HepG2 (cell line): ENCODE measurements at regions of chr14 and their contacts with region 1.

Region 1: DNA sequence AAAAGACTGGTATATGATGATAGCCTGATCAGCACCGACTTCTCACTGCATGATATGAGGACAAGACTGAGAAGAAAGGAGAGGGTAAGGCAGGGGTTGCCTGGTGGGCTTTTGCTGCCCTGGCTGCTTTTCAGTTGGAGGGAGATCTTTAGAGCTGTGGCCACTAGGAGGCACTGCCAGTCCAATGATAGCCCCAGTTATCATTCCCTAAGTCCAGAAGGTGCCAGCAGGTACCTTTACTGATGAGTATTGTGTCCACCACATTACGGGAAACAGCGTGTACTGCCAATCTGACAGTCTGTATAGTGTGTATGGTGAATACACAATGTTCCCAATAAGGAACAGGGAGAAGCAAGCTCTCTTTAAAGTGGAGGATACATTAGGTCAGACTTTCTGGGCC is 55.8 kb upstream of the CCDC175 start:
- DNase-seq: peak; percentile 20
- ATAC-seq: peak; percentile 90
- H3K4me3 ChIP-seq: no peak overlapping the region
- H3K27ac ChIP-seq: no peak overlapping the region
- H3K4me1 ChIP-seq: peaks cover 8% of the 10 kb centered on the region; the same call in 1 of the 2 replicates
- H3K27me3 ChIP-seq: peaks cover 1 to 3% of the 10 kb centered on the region in 2 experiments; a peak in 2 of 5 replicates
- CTCF ChIP-seq: peak; percentile 81
- EP300 ChIP-seq: no peak
- POLR2A ChIP-seq: no peak
- RAD21 ChIP-seq: no peak

Region 2: DNA sequence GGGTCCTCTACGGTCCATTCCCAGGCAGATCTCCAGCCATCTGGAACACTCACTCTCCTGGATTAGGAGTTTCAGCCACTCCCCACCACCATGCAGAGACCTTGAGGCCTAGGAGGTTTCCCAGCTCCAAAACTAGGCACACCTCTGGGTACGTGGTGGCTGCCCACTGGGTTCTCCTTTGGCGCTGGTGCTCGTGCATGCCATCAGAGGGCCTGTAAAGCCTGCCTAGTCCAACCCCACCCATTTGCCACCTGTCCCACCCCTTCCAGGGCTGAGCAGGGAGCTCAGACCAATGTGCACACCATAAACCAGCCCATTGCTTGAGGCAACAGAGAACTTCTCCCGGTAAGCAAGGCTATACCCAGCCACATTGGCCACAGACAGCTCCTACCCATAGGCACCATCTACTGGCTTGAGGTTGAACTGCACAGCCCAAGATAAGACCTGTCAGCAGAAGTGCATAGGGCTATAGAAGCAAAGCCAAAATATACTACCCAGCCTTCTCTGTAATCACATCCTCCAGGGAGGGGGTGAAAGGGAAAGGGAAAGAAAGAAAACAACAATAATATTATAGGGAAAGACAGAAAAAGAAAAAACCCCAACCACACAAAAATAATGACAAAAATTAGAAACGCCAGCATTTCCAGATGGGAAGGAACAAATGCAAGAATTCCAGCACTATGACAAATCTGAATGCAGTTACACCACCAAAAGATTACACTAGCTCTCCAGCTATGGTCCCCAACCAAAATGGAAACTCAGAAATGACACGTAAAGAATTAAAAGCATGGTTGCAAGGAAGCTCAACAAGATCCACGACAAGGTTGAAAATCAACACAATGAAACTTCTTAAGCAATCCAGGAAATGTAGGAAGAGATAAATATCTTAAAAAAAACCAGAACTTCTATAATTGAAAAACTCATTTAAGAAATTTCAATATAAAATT is 56.1 kb after region 1 on chr14:
- CTCF ChIA-PET with region 1: no interaction called
- POLR2A ChIA-PET with region 1: no interaction called
- in situ Hi-C with region 1: no loop called
- intact Hi-C with region 1: loop called (anchors 1 kb)
- DNase-seq: peak; percentile 20
- ATAC-seq: peak; percentile 99
- H3K4me3 ChIP-seq: no peak overlapping the region
- H3K27ac ChIP-seq: no peak overlapping the region
- H3K4me1 ChIP-seq: no peaks in the 10 kb centered on the region
- H3K27me3 ChIP-seq: no peaks in the 10 kb centered on the region; a peak in 1 of 5 replicates
- CTCF ChIP-seq: peak; percentile 76
- EP300 ChIP-seq: no peak
- POLR2A ChIP-seq: no peak
- RAD21 ChIP-seq: no peak

Region 3: GRCh38 chr14:59897761-59898383 is 265.5 kb after region 1 on chr14:
- CTCF ChIA-PET with region 1: no interaction called
- POLR2A ChIA-PET with region 1: no interaction called
- in situ Hi-C with region 1: no loop called
- intact Hi-C with region 1: loop called (anchors 1 kb)
- DNase-seq: peak; percentile 30
- ATAC-seq: peak; percentile 93
- H3K4me3 ChIP-seq: no peak overlapping the region
- H3K27ac ChIP-seq: no peak overlapping the region
- H3K4me1 ChIP-seq: no peaks in the 10 kb centered on the region
- H3K27me3 ChIP-seq: peaks cover 0 to 5% of the 10 kb centered on the region in 2 experiments; a peak in 3 of 5 replicates
- CTCF ChIP-seq: peak; percentile 79
- EP300 ChIP-seq: no peak
- POLR2A ChIP-seq: no peak
- RAD21 ChIP-seq: peak; percentile 64

Region 4: GRCh38 chr14:59918824-59919569 is 286.6 kb after region 1 on chr14:
- CTCF ChIA-PET with region 1: interaction called, 16 read pairs
- POLR2A ChIA-PET with region 1: no interaction called
- in situ Hi-C with region 1: loop called (anchors 10 kb)
- intact Hi-C with region 1: loop called (anchors 1 kb)
- DNase-seq: peak; percentile 32
- ATAC-seq: peak; percentile 82
- H3K4me3 ChIP-seq: peak overlapping the region; percentile 55 to 83 (median 64)
- H3K27ac ChIP-seq: peak overlapping the region; percentile 90
- H3K4me1 ChIP-seq: peaks cover 20% of the 10 kb centered on the region
- H3K27me3 ChIP-seq: no peaks in the 10 kb centered on the region
- CTCF ChIP-seq: peak; percentile 45
- EP300 ChIP-seq: no peak
- POLR2A ChIP-seq: no peak
- RAD21 ChIP-seq: no peak

Region 5: DNA sequence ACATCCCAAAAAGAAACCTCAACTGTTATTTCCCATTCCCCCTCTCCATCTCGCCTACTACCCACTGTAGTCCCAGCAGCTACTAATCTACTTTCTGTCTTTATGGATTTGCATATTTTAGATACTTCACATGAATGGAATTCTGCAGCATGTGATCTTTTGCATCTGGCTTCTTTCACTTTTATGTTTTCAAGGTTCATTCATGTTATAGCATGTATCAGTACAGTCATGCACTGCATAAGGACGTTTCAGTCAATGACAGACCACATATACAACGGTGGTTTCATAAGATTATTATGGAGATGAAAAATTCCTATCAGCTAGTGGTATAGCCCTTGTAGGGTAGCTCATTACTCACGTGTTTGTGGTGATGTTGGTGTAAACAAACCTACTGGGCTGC is 483.8 kb after region 1 on chr14:
- CTCF ChIA-PET with region 1: no interaction called
- POLR2A ChIA-PET with region 1: no interaction called
- in situ Hi-C with region 1: no loop called
- intact Hi-C with region 1: no loop called
- DNase-seq: no peak
- ATAC-seq: no peak
- H3K4me3 ChIP-seq: no peak overlapping the region
- H3K27ac ChIP-seq: no peak overlapping the region
- H3K4me1 ChIP-seq: no peaks in the 10 kb centered on the region
- H3K27me3 ChIP-seq: no peaks in the 10 kb centered on the region
- CTCF ChIP-seq: no peak
- EP300 ChIP-seq: no peak
- POLR2A ChIP-seq: no peak
- RAD21 ChIP-seq: no peak

Region 6: GRCh38 chr14:60184146-60184904 is 551.9 kb after region 1 on chr14:
- CTCF ChIA-PET with region 1: interaction called, 3 read pairs
- POLR2A ChIA-PET with region 1: no interaction called
- in situ Hi-C with region 1: no loop called
- intact Hi-C with region 1: loop called (anchors 2 kb)
- DNase-seq: peak; percentile 55
- ATAC-seq: 0 out of 3 replicates have a peak, but pooled peaks have one; percentile 36
- H3K4me3 ChIP-seq: peak overlapping the region; percentile 33 to 71 (median 45); a peak in 5 of 6 replicates
- H3K27ac ChIP-seq: no peak overlapping the region
- H3K4me1 ChIP-seq: peaks cover 12% of the 10 kb centered on the region; the same call in 1 of the 2 replicates
- H3K27me3 ChIP-seq: no peaks in the 10 kb centered on the region
- CTCF ChIP-seq: peak; percentile 74
- EP300 ChIP-seq: no peak
- POLR2A ChIP-seq: no peak
- RAD21 ChIP-seq: peak; percentile 61; the same call in 1 of the 2 replicates